Activated T-helper 2 cell treated with anti-CD3 and anti-CD28 coated beads, Interferon-gamma antibody, Interleukin-2, Interleukin-4, amounts not matched to agents 10 μg/mL and 5 μg/mL and 100 μg/mL, durations not matched to agents 14 hours and 24 hours and 36 hours (primary cell): ENCODE measurements at regions of chr4 and their contacts with region 1.

Region 1: GRCh38 chr4:121227341-121227792 is 63.2 kb upstream of the TNIP3 start:
- DNase-seq: no peak
- H3K4me3 Mint-ChIP-seq: peak overlapping the region; percentile 76
- H3K27ac Mint-ChIP-seq: peak overlapping the region; percentile 64
- H3K4me1 Mint-ChIP-seq: peaks cover 28% of the 10 kb centered on the region
- H3K27me3 Mint-ChIP-seq: peaks cover under 1% of the 10 kb centered on the region

Region 2: GRCh38 chr4:121148000-121148399 is 79.4 kb before region 1 on chr4:
- intact Hi-C with region 1: no loop called
- DNase-seq: no peak
- H3K4me3 Mint-ChIP-seq: no peak overlapping the region
- H3K27ac Mint-ChIP-seq: peak overlapping the region; percentile 58
- H3K4me1 Mint-ChIP-seq: peaks cover 45% of the 10 kb centered on the region
- H3K27me3 Mint-ChIP-seq: peaks cover 6% of the 10 kb centered on the region

Region 3: GRCh38 chr4:121192480-121192879 is 34.9 kb before region 1 on chr4:
- intact Hi-C with region 1: loop called (anchors 1 kb)
- DNase-seq: no peak
- H3K4me3 Mint-ChIP-seq: peak overlapping the region; percentile 55
- H3K27ac Mint-ChIP-seq: no peak overlapping the region
- H3K4me1 Mint-ChIP-seq: peaks cover 52% of the 10 kb centered on the region
- H3K27me3 Mint-ChIP-seq: no peaks in the 10 kb centered on the region

Region 4: DNA sequence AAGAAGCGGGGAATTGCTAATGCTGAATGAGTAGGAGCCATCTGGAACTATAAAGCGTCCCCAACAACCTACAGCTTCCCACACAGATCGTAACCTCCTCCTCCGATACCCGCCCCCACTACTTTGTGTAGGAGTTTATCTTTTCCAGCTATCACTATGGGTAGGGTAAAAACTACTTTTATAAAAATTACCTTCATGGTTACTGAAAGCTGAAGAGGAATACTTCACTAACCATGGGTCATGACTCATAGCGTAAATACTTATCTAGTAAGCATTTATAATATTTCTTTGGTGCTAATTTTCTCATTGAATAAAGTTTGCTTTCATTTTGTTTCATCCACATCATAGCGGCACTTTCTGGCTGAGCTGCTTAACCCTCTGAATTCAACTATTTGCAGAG is 16.1 kb after region 1 on chr4:
- intact Hi-C with region 1: loop called (anchors 1 kb)
- DNase-seq: no peak
- H3K4me3 Mint-ChIP-seq: peak overlapping the region; percentile 31
- H3K27ac Mint-ChIP-seq: peak overlapping the region; percentile 52
- H3K4me1 Mint-ChIP-seq: peaks cover 43% of the 10 kb centered on the region
- H3K27me3 Mint-ChIP-seq: peaks cover 1% of the 10 kb centered on the region